Mammary epithelial cell (primary cell): ENCODE measurements at regions of chr4 and their contacts with region 1.

Region 1: GRCh38 chr4:140153718-140154571 is at the start of gene MAML3:
- DNase-seq: peak; percentile 95
- H3K4me3 ChIP-seq: peak within 1 kb of the TSS; percentile 63 to 97 (median 65)
- H3K27ac ChIP-seq: peak within 1 kb of the TSS; percentile 53
- H3K4me1 ChIP-seq: peaks cover 17% of the 10 kb centered on the region
- H3K27me3 ChIP-seq: no peaks in the 10 kb centered on the region
- CTCF ChIP-seq: no peak
- total RNA-seq, gene MAML3: 0.45 to 2.8 TPM

Region 2: GRCh38 chr4:139734875-139735380 is 419.0 kb before region 1 on chr4:
- CTCF ChIA-PET with region 1: no interaction called
- dilution Hi-C with region 1: no loop called
- in situ Hi-C with region 1: no loop called
- intact Hi-C with region 1: loop called (anchors 10 kb)
- DNase-seq: peak; percentile 64
- H3K4me3 ChIP-seq: peak overlapping the region; percentile 35 to 36 (median 35)
- H3K27ac ChIP-seq: no peak overlapping the region
- H3K4me1 ChIP-seq: peaks cover 9% of the 10 kb centered on the region
- H3K27me3 ChIP-seq: peaks cover 12% of the 10 kb centered on the region
- CTCF ChIP-seq: peak; percentile 22 to 67

Region 3: DNA sequence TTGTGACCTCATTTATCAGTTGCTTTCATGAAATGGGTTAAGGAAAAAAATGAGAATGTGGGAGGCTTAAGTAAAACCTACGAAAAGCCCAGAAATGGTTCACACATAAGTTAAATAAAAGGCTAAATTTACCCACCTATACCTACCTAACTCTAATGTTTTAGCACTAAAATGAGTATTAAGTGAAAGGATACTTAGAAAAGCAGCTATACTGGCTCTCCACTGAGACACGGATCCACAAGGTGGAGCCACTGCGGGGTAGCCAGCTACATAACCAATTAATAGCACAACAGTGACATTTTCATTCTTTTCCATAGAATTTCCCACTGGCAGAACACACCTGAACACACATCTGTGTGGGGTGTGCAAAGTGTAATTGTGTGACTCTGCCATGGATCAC is 101.9 kb before region 1 on chr4:
- CTCF ChIA-PET with region 1: interaction called, 3 read pairs
- dilution Hi-C with region 1: loop called (anchors 5 kb)
- in situ Hi-C with region 1: loop called in 1 of 2 experiments (anchors 5 kb)
- intact Hi-C with region 1: loop called (anchors 1 kb)
- DNase-seq: peak; percentile 29
- H3K4me3 ChIP-seq: no peak overlapping the region
- H3K27ac ChIP-seq: no peak overlapping the region
- H3K4me1 ChIP-seq: peaks cover 7% of the 10 kb centered on the region
- H3K27me3 ChIP-seq: no peaks in the 10 kb centered on the region
- CTCF ChIP-seq: peak; percentile 49 to 80

Region 4: DNA sequence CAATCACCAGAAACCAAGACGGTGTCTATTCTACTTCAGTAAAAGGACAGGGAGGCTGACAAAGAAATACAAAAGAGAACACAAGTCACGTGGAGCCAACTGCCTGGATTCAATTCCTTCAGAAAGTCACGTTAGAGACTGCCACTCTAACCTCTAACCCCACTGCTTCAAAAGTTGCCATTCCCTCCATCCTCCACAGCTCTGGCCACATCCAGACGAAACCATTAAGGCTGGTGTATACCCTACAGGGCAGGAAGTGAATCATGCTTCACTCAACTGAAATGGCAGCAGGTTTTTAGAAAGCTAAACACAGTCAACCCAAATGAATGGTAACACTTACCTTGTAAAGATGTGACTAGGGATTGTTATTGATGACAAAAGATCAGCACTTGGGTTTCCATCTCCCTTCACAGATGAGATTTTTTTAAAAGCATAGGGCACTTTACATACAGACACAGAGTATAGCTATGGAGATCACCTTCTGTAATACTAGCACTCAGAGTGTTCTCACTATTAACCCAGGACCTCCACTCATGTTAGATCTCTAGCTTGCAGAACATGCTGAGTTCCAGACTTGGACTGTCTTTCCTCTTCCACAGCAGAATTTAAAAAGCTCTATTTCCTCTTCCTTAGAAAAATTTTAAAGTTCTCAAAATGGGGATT is 37.4 kb before region 1 on chr4:
- CTCF ChIA-PET with region 1: no interaction called
- dilution Hi-C with region 1: no loop called
- in situ Hi-C with region 1: no loop called
- intact Hi-C with region 1: no loop called
- DNase-seq: peak; percentile 69
- H3K4me3 ChIP-seq: no peak overlapping the region
- H3K27ac ChIP-seq: no peak overlapping the region
- H3K4me1 ChIP-seq: peaks cover 11% of the 10 kb centered on the region
- H3K27me3 ChIP-seq: no peaks in the 10 kb centered on the region
- CTCF ChIP-seq: no peak

Region 5: GRCh38 chr4:140130677-140131076 is 23.3 kb before region 1 on chr4:
- CTCF ChIA-PET with region 1: interaction called, 3 read pairs
- dilution Hi-C with region 1: no loop called
- in situ Hi-C with region 1: no loop called
- intact Hi-C with region 1: loop called (anchors 1 kb)
- DNase-seq: peak; percentile 93
- H3K4me3 ChIP-seq: no peak overlapping the region
- H3K27ac ChIP-seq: peak overlapping the region; percentile 58
- H3K4me1 ChIP-seq: peaks cover 13% of the 10 kb centered on the region
- H3K27me3 ChIP-seq: no peaks in the 10 kb centered on the region
- CTCF ChIP-seq: no peak

Region 6: DNA sequence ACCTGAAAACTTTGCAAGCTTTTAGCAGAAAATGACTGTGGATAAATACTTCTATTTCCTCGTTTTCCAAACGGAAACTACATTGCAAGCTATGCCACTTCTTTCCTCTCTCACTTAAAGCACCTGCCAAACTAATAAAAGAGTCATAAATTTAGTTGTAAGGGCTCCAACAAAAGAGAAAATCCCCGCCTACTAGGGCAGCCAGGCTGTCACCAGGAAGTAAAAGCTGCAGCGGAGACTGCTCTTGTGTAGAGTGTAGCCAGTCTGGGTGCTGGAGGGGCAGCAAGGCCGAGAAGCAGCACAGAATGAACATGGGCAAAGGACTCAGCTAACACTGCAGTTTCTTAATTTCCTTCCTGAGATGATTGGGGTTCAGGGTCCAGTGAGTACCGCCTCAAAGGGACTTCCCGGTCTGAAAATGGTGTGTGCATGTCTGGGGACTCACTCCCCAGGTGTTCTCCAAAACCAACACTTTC is 89.4 kb after region 1 on chr4:
- CTCF ChIA-PET with region 1: no interaction called
- dilution Hi-C with region 1: no loop called
- in situ Hi-C with region 1: loop called (anchors 10 kb)
- intact Hi-C with region 1: no loop called
- DNase-seq: no peak
- H3K4me3 ChIP-seq: no peak overlapping the region
- H3K27ac ChIP-seq: no peak overlapping the region
- H3K4me1 ChIP-seq: peaks cover 6% of the 10 kb centered on the region
- H3K27me3 ChIP-seq: no peaks in the 10 kb centered on the region
- CTCF ChIP-seq: no peak

Region 7: DNA sequence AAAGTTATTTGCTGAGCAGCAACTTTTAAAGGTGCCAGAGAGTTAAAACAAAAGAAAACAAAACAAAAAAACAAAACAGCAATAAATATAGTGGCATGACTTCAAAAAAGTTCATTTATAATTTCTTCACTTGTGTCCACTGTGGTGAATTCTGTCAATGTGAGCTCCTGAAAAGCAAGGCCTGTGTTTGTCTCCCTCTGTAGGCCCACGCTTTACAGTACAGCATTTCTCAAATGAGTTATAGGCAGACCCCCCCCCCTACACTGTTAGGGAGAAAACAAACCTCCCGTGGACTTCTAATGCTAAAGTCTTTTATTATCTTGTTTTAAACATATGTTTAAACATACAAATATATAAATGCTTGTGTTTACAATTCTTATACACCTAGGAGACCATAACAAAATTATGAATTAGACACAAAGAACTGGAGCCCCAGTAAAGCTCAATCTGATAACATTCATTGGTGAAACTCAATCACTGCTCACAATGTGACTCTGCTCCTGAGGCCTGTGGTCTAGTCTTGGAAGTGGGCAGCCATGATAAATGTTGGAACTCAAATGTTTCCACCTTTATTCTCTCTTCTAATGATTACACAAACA is 172.5 kb after region 1 on chr4:
- CTCF ChIA-PET with region 1: interaction called, 4 read pairs
- dilution Hi-C with region 1: no loop called
- in situ Hi-C with region 1: no loop called
- intact Hi-C with region 1: loop called (anchors 2 kb)
- DNase-seq: peak; percentile 22
- H3K4me3 ChIP-seq: no peak overlapping the region
- H3K27ac ChIP-seq: no peak overlapping the region
- H3K4me1 ChIP-seq: no peaks in the 10 kb centered on the region
- H3K27me3 ChIP-seq: no peaks in the 10 kb centered on the region
- CTCF ChIP-seq: peak; percentile 74 to 86